HepG2 (cell line): ENCODE measurements at regions of chr2 and their contacts with region 1.

Region 1: GRCh38 chr2:188316791-188317423 is 25.2 kb downstream of the GULP1 start:
- DNase-seq: no peak
- ATAC-seq: no peak
- H3K4me3 ChIP-seq: no peak overlapping the region
- H3K27ac ChIP-seq: no peak overlapping the region
- H3K4me1 ChIP-seq: no peaks in the 10 kb centered on the region
- H3K27me3 ChIP-seq: no peaks in the 10 kb centered on the region
- CTCF ChIP-seq: no peak
- EP300 ChIP-seq: no peak
- POLR2A ChIP-seq: no peak
- RAD21 ChIP-seq: no peak

Region 2: GRCh38 chr2:188306271-188306670 is 10.6 kb before region 1 on chr2:
- CTCF ChIA-PET with region 1: no interaction called
- POLR2A ChIA-PET with region 1: no interaction called
- in situ Hi-C with region 1: no loop called
- intact Hi-C with region 1: loop called (anchors 1 kb)
- DNase-seq: no peak
- ATAC-seq: no peak
- H3K4me3 ChIP-seq: no peak overlapping the region; a peak in 1 of 6 replicates
- H3K27ac ChIP-seq: no peak overlapping the region
- H3K4me1 ChIP-seq: no peaks in the 10 kb centered on the region
- H3K27me3 ChIP-seq: no peaks in the 10 kb centered on the region
- CTCF ChIP-seq: no peak
- EP300 ChIP-seq: no peak
- POLR2A ChIP-seq: no peak
- RAD21 ChIP-seq: no peak

Region 3: GRCh38 chr2:188444106-188444835 is 127.4 kb after region 1 on chr2:
- CTCF ChIA-PET with region 1: no interaction called
- POLR2A ChIA-PET with region 1: no interaction called
- in situ Hi-C with region 1: no loop called
- intact Hi-C with region 1: no loop called
- DNase-seq: no peak
- ATAC-seq: no peak
- H3K4me3 ChIP-seq: no peak overlapping the region
- H3K27ac ChIP-seq: no peak overlapping the region
- H3K4me1 ChIP-seq: no peaks in the 10 kb centered on the region
- H3K27me3 ChIP-seq: no peaks in the 10 kb centered on the region; a peak in 1 of 5 replicates
- CTCF ChIP-seq: no peak
- EP300 ChIP-seq: no peak
- POLR2A ChIP-seq: no peak
- RAD21 ChIP-seq: no peak